Gastrocnemius medialis (tissue), 4 donors: ENCODE measurements at regions of chr4 and their contacts with region 1.

Region 1: DNA sequence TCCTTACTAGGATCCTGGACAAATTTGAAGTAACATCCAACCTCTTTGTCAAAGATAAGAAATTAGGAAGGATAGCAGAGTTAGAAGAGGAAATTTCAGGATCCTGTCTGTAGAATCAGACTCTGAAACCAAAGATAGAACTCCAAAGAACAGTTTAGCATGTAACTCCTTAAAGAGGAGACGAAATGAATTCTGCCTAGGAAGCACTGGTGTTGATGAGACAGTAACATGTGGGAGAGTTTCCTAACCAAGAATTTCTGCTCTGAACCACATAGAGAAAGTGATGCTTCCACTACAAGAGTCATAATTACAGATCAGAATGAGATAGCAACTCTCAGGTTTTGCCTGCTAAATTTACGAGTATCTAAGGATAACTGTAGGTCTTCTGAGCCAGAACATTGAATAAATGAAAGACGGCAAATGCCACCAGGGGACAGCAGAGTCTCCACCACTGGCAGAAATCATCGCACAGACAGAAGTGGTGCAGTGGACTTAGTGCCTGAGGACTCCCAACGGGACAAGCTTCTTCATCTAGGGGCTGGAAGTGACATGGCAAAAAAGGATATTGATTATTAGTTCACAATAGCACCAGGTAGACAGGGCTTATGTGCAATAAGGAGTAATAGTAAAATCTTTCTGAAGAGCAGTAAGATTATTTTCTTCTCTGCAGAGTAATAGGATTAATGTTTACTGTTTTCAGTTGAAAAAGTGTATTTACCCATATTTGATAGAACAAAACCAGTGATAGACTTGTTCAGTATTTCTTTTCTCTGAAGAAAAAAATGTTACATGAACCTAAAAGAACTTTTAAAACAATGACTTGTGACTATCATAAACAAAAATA is 6.7 kb upstream of the PPID start:
- DNase-seq: peak; percentile 10 to 55
- ATAC-seq: peak; percentile 87 to 97
- H3K4me3 ChIP-seq: no peak overlapping the region
- H3K27ac ChIP-seq: no peak overlapping the region
- H3K4me1 ChIP-seq: no peaks in the 10 kb centered on the region
- H3K27me3 ChIP-seq: no peaks in the 10 kb centered on the region
- CTCF ChIP-seq: peak; percentile 82 to 95 (median 91)
- POLR2A ChIP-seq: no peak

Region 2: DNA sequence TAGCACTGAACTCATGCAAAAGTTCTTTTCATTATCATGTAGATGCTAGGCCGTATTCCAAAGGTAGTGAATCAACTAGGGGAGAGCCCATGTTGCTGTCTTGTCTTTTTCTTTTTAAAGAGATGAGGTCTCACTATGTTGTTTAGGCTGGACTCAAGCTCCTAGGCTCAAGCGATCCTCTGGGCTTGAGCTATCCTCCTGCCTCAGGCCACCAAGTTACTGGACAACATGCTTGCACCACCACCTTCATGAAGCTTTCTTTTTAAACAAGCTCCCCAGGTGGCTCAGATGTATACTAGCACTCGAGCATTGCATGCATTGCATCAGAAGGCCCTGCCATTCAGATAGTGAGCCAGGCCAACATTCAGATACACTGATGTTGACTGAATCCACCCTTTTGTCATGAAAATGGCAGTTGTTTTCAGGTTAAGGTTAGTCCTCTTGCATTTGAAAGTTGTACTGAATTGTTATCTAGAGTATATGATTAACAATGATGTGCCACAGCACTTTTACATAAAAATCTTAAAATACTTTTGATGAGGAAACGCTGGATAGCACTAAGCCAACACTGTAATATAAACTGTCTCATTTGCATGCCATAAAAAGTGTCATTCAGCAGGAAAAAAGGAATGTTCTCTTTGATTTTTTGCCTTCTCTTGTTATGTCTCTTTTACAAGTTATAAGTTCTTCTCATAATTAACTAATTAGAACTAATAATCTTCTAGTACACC is 115.5 kb after region 1 on chr4:
- in situ Hi-C with region 1: loop called (anchors 5 to 10 kb)
- intact Hi-C with region 1: loop called (anchors 1 kb)
- DNase-seq: no peak
- ATAC-seq: no peak
- H3K4me3 ChIP-seq: no peak overlapping the region
- H3K27ac ChIP-seq: no peak overlapping the region
- H3K4me1 ChIP-seq: peaks cover 5 to 19% of the 10 kb centered on the region in 2 donors
- H3K27me3 ChIP-seq: no peaks in the 10 kb centered on the region
- CTCF ChIP-seq: no peak
- POLR2A ChIP-seq: no peak

Region 3: GRCh38 chr4:158850800-158851644 is 121.1 kb after region 1 on chr4:
- in situ Hi-C with region 1: loop called (anchors 5 to 10 kb)
- intact Hi-C with region 1: loop called (anchors 1 kb)
- DNase-seq: no peak
- ATAC-seq: peak in 1 of 2 donors; percentile 43
- H3K4me3 ChIP-seq: no peak overlapping the region
- H3K27ac ChIP-seq: peak overlapping the region in 1 of 4 donors; percentile 28
- H3K4me1 ChIP-seq: no peaks in the 10 kb centered on the region
- H3K27me3 ChIP-seq: no peaks in the 10 kb centered on the region
- CTCF ChIP-seq: peak; percentile 66 to 75 (median 70)
- POLR2A ChIP-seq: no peak

Region 4: DNA sequence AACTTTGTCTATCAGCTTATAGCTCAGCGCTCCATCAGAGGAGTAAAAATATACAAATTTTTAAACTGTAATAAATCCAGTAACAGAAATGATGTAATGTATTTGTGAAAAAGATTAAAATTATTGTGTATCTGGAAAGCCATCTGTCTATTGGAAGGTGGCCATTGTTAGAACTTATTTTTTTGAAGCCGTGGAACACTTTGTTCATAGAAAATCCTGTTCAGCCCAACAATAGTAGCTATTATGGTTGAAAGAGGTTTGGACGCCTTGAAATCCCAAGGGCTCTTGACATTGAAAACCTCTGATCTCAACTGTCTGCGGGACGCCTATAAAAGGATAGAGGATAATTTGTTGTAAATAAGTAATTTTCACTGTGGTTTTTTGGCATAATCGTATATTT is 471.2 kb after region 1 on chr4:
- in situ Hi-C with region 1: loop called in 3 of 4 experiments (anchors 5 to 10 kb)
- intact Hi-C with region 1: loop called (anchors 2 kb)
- DNase-seq: no peak
- ATAC-seq: peak; percentile 28 to 36
- H3K4me3 ChIP-seq: no peak overlapping the region
- H3K27ac ChIP-seq: peak overlapping the region; percentile 55 to 72 (median 58)
- H3K4me1 ChIP-seq: peaks cover 42 to 49% of the 10 kb centered on the region in 2 donors
- H3K27me3 ChIP-seq: no peaks in the 10 kb centered on the region
- CTCF ChIP-seq: no peak
- POLR2A ChIP-seq: no peak

Region 5: GRCh38 chr4:159206427-159206871 is 476.5 kb after region 1 on chr4:
- in situ Hi-C with region 1: loop called in 3 of 4 experiments (anchors 5 to 10 kb)
- intact Hi-C with region 1: loop called (anchors 2 kb)
- DNase-seq: no peak
- ATAC-seq: no peak
- H3K4me3 ChIP-seq: no peak overlapping the region
- H3K27ac ChIP-seq: peak overlapping the region in 1 of 4 donors; percentile 19
- H3K4me1 ChIP-seq: peaks cover 15 to 46% of the 10 kb centered on the region in 2 donors
- H3K27me3 ChIP-seq: no peaks in the 10 kb centered on the region
- CTCF ChIP-seq: no peak
- POLR2A ChIP-seq: no peak